A549 (cell line): ENCODE measurements at regions of chr3 and their contacts with region 1.

Region 1: DNA sequence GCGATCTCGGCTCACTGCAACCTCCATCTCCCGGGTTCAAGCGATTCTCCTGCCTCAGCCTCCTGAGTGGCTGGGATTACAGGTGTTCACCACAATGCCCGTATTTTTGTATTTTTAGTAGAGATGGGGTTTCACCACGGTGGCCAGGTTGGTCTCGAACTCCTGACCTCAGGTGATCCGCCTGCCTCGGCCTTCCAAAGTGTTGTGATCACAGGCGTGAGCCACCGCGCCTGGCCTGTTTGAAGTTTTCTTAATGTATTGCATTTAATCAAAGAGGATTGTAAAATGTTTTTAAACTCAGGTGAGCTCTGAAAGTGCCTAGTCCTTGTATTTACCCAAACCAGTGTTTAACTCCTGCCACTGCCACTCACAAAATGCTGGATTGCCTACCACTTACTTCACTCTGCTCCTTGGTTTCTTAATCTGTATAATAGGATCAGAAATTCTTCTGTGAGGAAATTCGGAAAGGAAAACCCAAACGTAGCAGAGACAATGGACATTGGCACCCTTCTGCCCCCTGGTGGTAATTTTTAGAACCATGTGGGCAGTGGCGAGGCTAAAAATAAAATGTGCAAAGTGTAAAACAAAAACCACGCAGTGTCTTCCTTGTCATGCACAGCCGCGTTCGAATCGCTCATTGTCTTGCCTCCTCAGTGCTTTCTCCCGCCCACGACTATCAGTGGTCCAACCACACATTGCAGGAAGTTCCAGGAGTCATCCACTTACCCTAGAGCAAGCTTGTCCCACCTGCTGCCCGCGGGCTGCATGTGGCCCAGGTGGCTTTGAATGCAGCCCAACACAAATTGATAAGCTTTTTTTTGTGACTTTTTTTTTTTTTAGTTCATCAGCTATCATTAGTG is 27.3 kb downstream of the CEP19 start:
- DNase-seq: peak; percentile 34 to 39
- ATAC-seq: peak; percentile 59 to 84
- H3K4me3 ChIP-seq: no peak overlapping the region
- H3K27ac ChIP-seq: peak overlapping the region; percentile 36 to 66; a peak in 3 of 6 replicates
- H3K4me1 ChIP-seq: peaks cover 3% of the 10 kb centered on the region; the same call in 1 of the 3 replicates
- CTCF ChIP-seq: peak; percentile 75
- EP300 ChIP-seq: no peak
- POLR2A ChIP-seq: no peak
- RAD21 ChIP-seq: peak; percentile 79 to 83

Region 2: GRCh38 chr3:196547067-196547466 is 137.7 kb before region 1 on chr3:
- CTCF ChIA-PET with region 1: no interaction called
- POLR2A ChIA-PET with region 1: no interaction called
- DNase-seq: no peak
- ATAC-seq: peak; percentile 50 to 66; a peak in 4 of 6 replicates
- H3K4me3 ChIP-seq: no peak overlapping the region
- H3K27ac ChIP-seq: no peak overlapping the region
- H3K4me1 ChIP-seq: no peaks in the 10 kb centered on the region
- CTCF ChIP-seq: no peak
- EP300 ChIP-seq: no peak
- POLR2A ChIP-seq: no peak
- RAD21 ChIP-seq: no peak

Region 3: GRCh38 chr3:196711838-196712513 is 27.2 kb after region 1 on chr3 and contains the starts of genes CEP19 and PIGX:
- CTCF ChIA-PET with region 1: interaction called, 12 read pairs
- POLR2A ChIA-PET with region 1: no interaction called
- DNase-seq: peak; percentile 74 to 81
- ATAC-seq: peak; percentile 89 to 93
- H3K4me3 ChIP-seq: peak within 1 kb of the TSS; percentile 93
- H3K27ac ChIP-seq: peak within 1 kb of the TSS; percentile 95 to 99
- H3K4me1 ChIP-seq: peaks cover 19% of the 10 kb centered on the region
- CTCF ChIP-seq: no peak
- EP300 ChIP-seq: no peak
- POLR2A ChIP-seq: peak; percentile 76
- RAD21 ChIP-seq: no peak
- polyA plus RNA-seq, gene CEP19: 4.2 and 5.3 TPM in 2 replicates
- polyA plus RNA-seq, gene PIGX: 36.2 and 45.2 TPM in 2 replicates

Region 4: GRCh38 chr3:197093871-197094270 is 409.1 kb after region 1 on chr3:
- CTCF ChIA-PET with region 1: no interaction called
- POLR2A ChIA-PET with region 1: no interaction called
- DNase-seq: no peak
- ATAC-seq: no peak
- H3K4me3 ChIP-seq: no peak overlapping the region
- H3K27ac ChIP-seq: no peak overlapping the region
- H3K4me1 ChIP-seq: no peaks in the 10 kb centered on the region
- CTCF ChIP-seq: no peak
- EP300 ChIP-seq: no peak
- POLR2A ChIP-seq: no peak
- RAD21 ChIP-seq: no peak